Posterior cingulate gyrus (tissue), 11 donors: ENCODE measurements at regions of chr11 and their contacts with region 1.

Region 1: DNA sequence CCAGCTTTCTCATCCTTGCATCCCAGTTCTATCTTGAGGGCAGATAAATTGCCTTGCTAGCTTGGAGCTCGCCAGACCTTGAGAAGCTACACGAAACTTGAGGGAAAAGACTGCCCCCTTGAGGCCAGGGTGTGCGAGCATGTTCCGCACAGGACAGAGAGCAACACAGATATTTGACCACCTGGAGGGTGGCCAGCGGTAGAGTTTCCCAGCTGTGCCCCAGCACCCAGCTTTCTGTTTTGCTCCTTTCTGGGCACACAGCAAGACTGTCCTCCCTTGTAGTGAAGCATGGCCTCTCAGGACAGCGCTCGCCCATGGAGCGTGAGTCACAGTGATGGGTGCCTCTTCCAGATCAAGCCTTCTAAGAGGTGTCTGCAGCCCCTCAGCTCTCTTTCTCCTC is 23.5 kb downstream of the SPATA19 start:
- DNase-seq: peak; percentile 54 to 95 (median 76)

Region 2: GRCh38 chr11:133520707-133521106 is 301.1 kb before region 1 on chr11:
- intact Hi-C with region 1: loop called (anchors 10 kb)
- DNase-seq: no peak

Region 3: DNA sequence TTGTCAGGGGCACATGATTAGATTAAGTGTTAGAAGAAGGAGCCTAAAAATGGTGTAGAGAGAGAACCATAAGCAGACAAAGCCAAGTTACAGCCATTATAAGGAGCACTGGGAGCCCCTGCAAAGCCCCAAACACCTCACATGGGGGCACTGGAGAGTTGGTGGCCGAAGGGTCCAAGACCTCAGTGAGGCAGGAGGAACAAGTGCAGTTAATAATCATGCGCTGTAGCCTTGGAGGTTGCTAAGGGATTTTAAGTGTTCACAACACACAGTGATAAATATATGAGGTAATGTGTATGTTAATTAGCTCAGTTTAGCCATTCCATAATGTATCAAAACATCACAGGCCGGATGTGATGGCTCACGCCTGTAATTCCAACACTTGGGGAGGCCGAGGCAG is 192.7 kb after region 1 on chr11:
- intact Hi-C with region 1: no loop called
- DNase-seq: peak in 1 of 10 donors; percentile 8